ENCODE measurements at regions of chr3 and their contacts with region 1.

Region 1: GRCh38 chr3:58008140-58009025 is at the start of gene FLNB:
- DNase-seq: peak; percentile 65 to 90
- ATAC-seq: peak; percentile 88 to 91 (median 90)
- H3K4me3 ChIP-seq: peak within 1 kb of the TSS; percentile 95
- H3K4me3 Mint-ChIP-seq: peak within 1 kb of the TSS; percentile 76
- H3K27ac ChIP-seq: peak within 1 kb of the TSS; percentile 41
- H3K27ac Mint-ChIP-seq: peak within 1 kb of the TSS; percentile 33 to 48
- H3K4me1 ChIP-seq: peaks cover 36% of the 10 kb centered on the region
- H3K4me1 Mint-ChIP-seq: peaks cover 22 to 32% of the 10 kb centered on the region in 2 donors
- H3K27me3 ChIP-seq: no peaks in the 10 kb centered on the region
- H3K27me3 Mint-ChIP-seq: no peaks in the 10 kb centered on the region
- CTCF ChIP-seq: peak; percentile 63
- total RNA-seq, gene FLNB: 24.6 to 30.8 (median 26.6) TPM

Region 2: DNA sequence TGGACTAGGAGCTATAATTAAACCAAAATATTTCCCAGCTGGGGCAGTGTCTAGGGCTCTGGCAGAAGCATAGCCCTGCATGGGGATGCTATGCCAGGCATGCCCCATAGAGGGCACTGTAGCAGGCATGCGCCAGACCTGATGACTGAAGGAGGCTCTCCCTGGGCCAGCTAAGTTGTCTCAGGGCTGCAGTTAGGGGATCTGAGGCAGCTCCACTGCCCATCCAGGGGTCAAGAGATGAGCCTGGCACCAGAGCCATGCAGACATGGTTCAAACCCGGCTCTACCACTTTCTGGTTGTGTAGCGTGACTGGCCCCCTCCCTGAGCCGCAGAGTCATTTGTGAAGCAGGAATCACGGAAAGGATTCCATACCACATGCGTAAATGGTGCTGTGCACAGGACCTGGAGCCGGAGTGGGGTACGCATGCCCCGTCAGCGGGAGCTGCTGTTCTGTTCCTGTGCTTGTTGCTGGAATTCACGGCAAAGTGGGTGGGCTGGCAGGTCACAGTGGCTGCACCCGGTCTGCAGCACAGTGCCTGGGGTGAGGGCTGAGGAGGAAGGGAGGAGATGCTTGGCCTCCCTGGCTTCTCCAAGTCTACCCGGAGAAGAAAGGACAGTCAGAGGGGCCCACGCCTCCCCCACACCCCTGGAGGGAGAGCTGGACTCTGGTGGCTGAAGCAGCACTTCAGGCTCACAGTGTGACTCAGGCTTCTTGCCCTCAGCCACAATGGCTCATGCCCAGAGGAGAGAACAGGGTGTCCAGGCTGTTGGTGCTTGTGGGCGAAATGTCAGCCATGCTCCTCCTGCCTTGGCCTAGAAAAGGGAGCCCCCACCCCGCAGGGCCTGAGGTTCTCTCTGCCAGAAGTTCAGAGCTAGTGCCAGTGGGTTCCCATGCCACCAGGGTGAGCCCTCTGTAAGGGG is 159.3 kb after region 1 on chr3:
- intact Hi-C with region 1: loop called (anchors 1 kb)
- DNase-seq: peak; percentile 31 to 70
- ATAC-seq: peak; percentile 75 to 86 (median 83)
- H3K4me3 ChIP-seq: no peak overlapping the region
- H3K4me3 Mint-ChIP-seq: no peak overlapping the region
- H3K27ac ChIP-seq: no peak overlapping the region
- H3K27ac Mint-ChIP-seq: no peak overlapping the region
- H3K4me1 ChIP-seq: no peaks in the 10 kb centered on the region
- H3K4me1 Mint-ChIP-seq: no peaks in the 10 kb centered on the region
- H3K27me3 ChIP-seq: no peaks in the 10 kb centered on the region
- H3K27me3 Mint-ChIP-seq: no peaks in the 10 kb centered on the region
- CTCF ChIP-seq: peak; percentile 72

Region 3: GRCh38 chr3:58217209-58217811 is 208.9 kb after region 1 on chr3:
- intact Hi-C with region 1: loop called (anchors 5 kb)
- DNase-seq: peak; percentile 33 to 81
- ATAC-seq: peak; percentile 81 to 90 (median 83)
- H3K4me3 ChIP-seq: no peak overlapping the region
- H3K4me3 Mint-ChIP-seq: peak overlapping the region; percentile 60
- H3K27ac ChIP-seq: no peak overlapping the region
- H3K27ac Mint-ChIP-seq: peak overlapping the region in 1 of 2 donors; percentile 71
- H3K4me1 ChIP-seq: peaks cover 23% of the 10 kb centered on the region
- H3K4me1 Mint-ChIP-seq: peaks cover 8 to 14% of the 10 kb centered on the region in 2 donors
- H3K27me3 ChIP-seq: no peaks in the 10 kb centered on the region
- H3K27me3 Mint-ChIP-seq: peaks cover 0 to 2% of the 10 kb centered on the region in 2 donors
- CTCF ChIP-seq: peak; percentile 81